Uterus (tissue), 4 donors: ENCODE measurements at regions of chr9 and their contacts with region 1.

Region 1: DNA sequence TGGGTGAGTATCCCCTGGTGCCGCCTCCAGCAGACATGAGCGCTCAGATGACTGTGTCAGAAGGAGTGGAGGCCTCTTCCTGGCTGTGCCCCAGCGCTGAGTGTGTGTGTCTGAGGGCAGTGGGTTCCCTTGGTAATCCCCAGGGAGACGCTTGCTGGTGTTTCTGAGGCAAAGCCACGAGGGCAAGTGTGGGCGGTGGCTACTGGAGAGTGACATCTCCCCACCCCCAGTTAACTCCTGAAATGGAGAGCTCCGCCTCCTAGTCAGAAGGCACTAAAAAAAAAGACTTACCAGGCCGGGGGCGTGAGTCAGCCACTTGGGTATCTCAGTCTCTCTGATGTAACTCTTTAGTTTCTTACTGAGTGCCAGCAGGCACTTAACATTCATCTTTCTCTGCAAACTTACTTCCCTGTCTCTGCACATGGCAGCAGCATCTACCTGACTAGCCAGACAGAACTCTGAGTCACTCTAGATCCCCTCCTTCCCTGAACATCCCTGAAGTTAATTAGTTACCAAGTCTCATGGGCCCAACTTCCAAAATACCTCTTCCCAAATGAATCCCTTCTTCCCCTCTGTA is 19.3 kb downstream of the ORM2 start:
- DNase-seq: peak; percentile 89 to 95
- H3K4me3 ChIP-seq: no peak overlapping the region
- H3K27ac ChIP-seq: peak overlapping the region; percentile 80 to 84
- H3K4me1 ChIP-seq: peaks cover 5 to 11% of the 10 kb centered on the region in 2 donors
- H3K27me3 ChIP-seq: no peaks in the 10 kb centered on the region
- CTCF ChIP-seq: no peak
- POLR2A ChIP-seq: peak in 1 of 2 donors; percentile 12

Region 2: DNA sequence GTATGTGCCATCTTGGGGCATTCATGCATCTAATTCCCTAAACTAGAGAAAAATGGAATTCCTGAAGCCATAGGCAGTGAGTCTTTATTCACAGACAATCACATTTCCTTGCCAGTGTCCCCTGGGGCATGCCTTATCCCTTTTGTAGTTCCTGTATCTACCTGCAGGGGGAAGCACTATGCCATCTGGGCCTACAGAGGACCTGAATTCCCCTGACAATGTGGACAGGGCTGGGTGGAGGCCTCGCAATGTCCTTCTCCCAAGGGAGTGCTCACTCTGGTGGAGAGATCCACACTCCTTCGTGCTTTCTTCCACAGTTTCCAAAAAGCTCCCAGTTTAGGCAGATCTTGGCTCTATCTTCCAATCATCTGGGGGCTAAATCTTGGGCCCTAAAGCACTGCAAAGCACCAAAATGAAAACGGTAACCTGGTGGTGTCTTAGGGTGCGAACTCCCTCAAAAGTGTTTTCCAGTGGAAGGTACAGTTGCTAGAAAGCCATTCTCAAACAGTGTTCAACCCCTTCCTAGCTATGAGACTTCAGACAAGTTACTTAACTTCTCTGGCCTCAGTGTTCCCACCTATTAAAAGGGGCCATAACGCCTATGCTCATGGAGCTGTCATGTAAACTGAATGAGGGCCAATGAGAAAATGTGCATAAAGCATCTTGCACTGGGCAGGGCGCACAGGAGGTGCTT is 138.8 kb after region 1 on chr9:
- intact Hi-C with region 1: loop called (anchors 10 kb)
- DNase-seq: peak in 1 of 2 donors; percentile 58
- H3K4me3 ChIP-seq: no peak overlapping the region
- H3K27ac ChIP-seq: no peak overlapping the region
- H3K4me1 ChIP-seq: no peaks in the 10 kb centered on the region
- H3K27me3 ChIP-seq: no peaks in the 10 kb centered on the region
- CTCF ChIP-seq: peak; percentile 56 to 79 (median 74)
- POLR2A ChIP-seq: no peak

Region 3: GRCh38 chr9:114799441-114799840 is 450.4 kb after region 1 on chr9:
- intact Hi-C with region 1: no loop called
- DNase-seq: no peak
- H3K4me3 ChIP-seq: no peak overlapping the region
- H3K27ac ChIP-seq: no peak overlapping the region
- H3K4me1 ChIP-seq: no peaks in the 10 kb centered on the region
- H3K27me3 ChIP-seq: no peaks in the 10 kb centered on the region
- CTCF ChIP-seq: no peak
- POLR2A ChIP-seq: no peak